ENCODE measurements at regions of chr3 and their contacts with region 1.

Region 1: GRCh38 chr3:38479431-38480092 is 16.6 kb upstream of the EXOG start:
- DNase-seq: no peak
- H3K4me3 Mint-ChIP-seq: no peak overlapping the region
- H3K27ac Mint-ChIP-seq: no peak overlapping the region
- H3K4me1 Mint-ChIP-seq: peaks cover 2% of the 10 kb centered on the region
- H3K27me3 Mint-ChIP-seq: no peaks in the 10 kb centered on the region

Region 2: GRCh38 chr3:38117748-38118420 is 361.7 kb before region 1 on chr3:
- intact Hi-C with region 1: loop called (anchors 5 kb)
- DNase-seq: peak; percentile 68
- H3K4me3 Mint-ChIP-seq: no peak overlapping the region
- H3K27ac Mint-ChIP-seq: no peak overlapping the region
- H3K4me1 Mint-ChIP-seq: no peaks in the 10 kb centered on the region
- H3K27me3 Mint-ChIP-seq: no peaks in the 10 kb centered on the region

Measured in activated T-helper 2 cell treated with anti-CD3 and anti-CD28 coated beads, Interferon-gamma antibody, Interleukin-2, Interleukin-4, amounts not matched to agents 10 μg/mL and 5 μg/mL and 100 μg/mL, durations not matched to agents 14 hours and 24 hours and 36 hours (primary cell).